Gastrocnemius medialis (tissue), 4 donors: ENCODE measurements at regions of chr16 and their contacts with region 1.

Region 1: GRCh38 chr16:24041826-24042631 is 206.2 kb downstream of the PRKCB start:
- DNase-seq: no peak
- ATAC-seq: no peak
- H3K4me3 ChIP-seq: no peak overlapping the region
- H3K27ac ChIP-seq: no peak overlapping the region
- H3K4me1 ChIP-seq: no peaks in the 10 kb centered on the region
- H3K27me3 ChIP-seq: no peaks in the 10 kb centered on the region
- CTCF ChIP-seq: peak in 3 of 5 experiments; percentile 25 to 44 (median 40)
- POLR2A ChIP-seq: no peak

Region 2: DNA sequence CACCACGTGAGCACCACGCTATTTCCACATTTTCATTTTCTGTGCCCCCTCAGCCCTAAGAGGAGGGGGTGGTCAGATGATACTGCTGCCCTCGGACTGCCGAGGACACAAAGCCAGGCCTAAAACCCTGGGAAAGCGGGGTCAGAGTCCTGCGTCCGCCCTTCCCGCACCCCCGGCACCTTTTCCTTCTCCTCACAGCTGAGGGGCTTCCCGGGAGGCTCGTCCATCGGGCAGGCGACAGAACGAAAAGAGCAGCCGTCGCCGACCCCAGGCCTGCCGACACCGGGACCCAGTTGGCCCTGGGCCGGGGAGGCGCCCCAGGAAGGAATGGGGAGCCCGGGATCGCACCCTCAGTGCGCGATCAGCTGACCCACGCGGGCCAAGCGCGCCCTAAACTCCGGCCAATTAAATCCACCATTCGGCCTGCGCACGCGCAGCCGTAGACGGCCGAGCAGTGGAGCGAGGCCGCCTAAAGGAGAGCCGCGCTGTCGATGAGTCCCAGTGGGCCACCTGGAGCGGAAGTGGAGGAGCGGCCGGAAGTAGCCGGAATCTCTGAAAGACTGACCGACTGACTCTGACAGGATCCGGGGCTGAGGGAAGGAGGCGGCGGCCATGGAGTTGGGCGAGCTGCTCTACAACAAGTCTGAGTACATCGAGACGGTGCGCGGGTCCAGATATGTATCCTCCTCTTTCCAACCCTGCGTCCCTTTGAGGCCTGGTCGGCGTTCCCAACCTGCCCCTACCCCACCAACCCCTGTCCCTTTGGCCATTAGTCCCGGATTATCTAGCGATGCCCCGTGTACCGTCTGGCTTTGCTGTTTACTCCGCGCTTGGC is 400.9 kb before region 1 on chr16 and contains the starts of genes DCTN5 and PALB2:
- in situ Hi-C with region 1: loop called in 1 of 4 experiments (anchors 25 kb)
- intact Hi-C with region 1: no loop called
- DNase-seq: peak; percentile 90 to 94
- ATAC-seq: peak; percentile 99 to 100
- H3K4me3 ChIP-seq: peak within 1 kb of the TSS; percentile 89 to 100 (median 96)
- H3K27ac ChIP-seq: peak within 1 kb of the TSS; percentile 89 to 95 (median 92)
- H3K4me1 ChIP-seq: peaks cover 20 to 23% of the 10 kb centered on the region in 2 donors
- H3K27me3 ChIP-seq: no peaks in the 10 kb centered on the region
- CTCF ChIP-seq: peak in 2 of 5 experiments; percentile 11 to 13
- POLR2A ChIP-seq: peak; percentile 48 to 67
- total RNA-seq, gene DCTN5: 22.9 to 34.4 (median 24.8) TPM
- total RNA-seq, gene PALB2: 6.0 to 11.0 (median 7.3) TPM

Region 3: DNA sequence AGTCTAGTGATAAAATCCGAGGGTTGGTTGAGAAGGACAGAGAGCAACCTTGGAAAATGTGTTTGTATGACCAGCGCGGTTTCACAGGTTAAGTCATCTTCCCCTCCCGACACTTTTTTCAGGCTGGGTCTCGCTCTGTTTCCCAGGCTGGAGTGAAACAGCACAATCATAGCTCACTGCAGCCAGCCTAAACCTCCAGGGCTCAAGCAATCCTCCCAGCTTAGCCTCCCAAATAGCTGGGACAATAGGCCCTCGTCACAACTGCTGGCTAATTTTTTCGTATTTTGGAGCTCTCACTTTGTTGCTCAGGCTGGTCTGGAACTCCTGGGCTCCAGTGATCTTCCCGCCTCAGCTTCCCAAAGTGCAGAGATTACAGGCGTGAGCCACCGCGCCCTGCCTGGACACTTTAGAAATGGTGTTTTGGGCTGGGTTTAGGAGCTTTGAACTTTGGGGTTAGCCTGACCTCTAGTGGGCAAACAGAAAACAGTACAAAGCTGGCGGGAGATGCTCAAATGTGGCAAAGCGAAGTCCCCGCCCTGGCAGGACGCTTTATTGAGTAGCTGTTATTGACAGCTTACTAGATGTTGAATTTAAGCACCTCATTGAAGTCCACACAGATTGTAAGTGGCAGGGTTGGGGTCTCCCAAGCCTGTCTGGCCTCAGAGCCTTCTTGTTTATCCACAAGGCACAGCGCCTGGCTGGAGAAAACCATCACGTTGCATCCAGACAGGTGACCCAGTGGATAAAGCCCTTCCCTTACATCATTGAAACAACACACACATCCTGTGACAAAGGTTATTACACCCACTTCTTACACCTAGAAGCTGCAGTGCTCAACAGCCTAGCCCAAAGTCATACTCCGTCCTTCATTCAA is 462.7 kb after region 1 on chr16:
- in situ Hi-C with region 1: loop called in 1 of 4 experiments (anchors 10 kb)
- intact Hi-C with region 1: loop called (anchors 10 kb)
- DNase-seq: peak in 1 of 2 donors; percentile 8
- ATAC-seq: peak; percentile 56 to 65
- H3K4me3 ChIP-seq: no peak overlapping the region
- H3K27ac ChIP-seq: no peak overlapping the region
- H3K4me1 ChIP-seq: peaks cover 3 to 7% of the 10 kb centered on the region in 2 donors
- H3K27me3 ChIP-seq: no peaks in the 10 kb centered on the region
- CTCF ChIP-seq: peak; percentile 33 to 72 (median 59)
- POLR2A ChIP-seq: no peak